ENCODE measurements at regions of chr4 and their contacts with region 1.

Region 1: GRCh38 chr4:112327965-112328733 is 31.0 kb downstream of the ALPK1 start:
- DNase-seq: peak in 2 of 3 donors; percentile 29 to 34
- H3K4me3 ChIP-seq: no peak overlapping the region
- H3K4me3 Mint-ChIP-seq: no peak overlapping the region
- H3K27ac ChIP-seq: no peak overlapping the region
- H3K27ac Mint-ChIP-seq: no peak overlapping the region
- H3K4me1 ChIP-seq: peaks cover 11 to 17% of the 10 kb centered on the region in 2 donors
- H3K4me1 Mint-ChIP-seq: peaks cover 13% of the 10 kb centered on the region
- H3K27me3 ChIP-seq: no peaks in the 10 kb centered on the region
- H3K27me3 Mint-ChIP-seq: no peaks in the 10 kb centered on the region
- CTCF ChIP-seq: peak; percentile 54

Region 2: GRCh38 chr4:112214390-112215264 is 113.5 kb before region 1 on chr4:
- intact Hi-C with region 1: no loop called
- DNase-seq: peak; percentile 11 to 28 (median 14)
- H3K4me3 ChIP-seq: peak overlapping the region in 1 of 3 experiments; percentile 21
- H3K4me3 Mint-ChIP-seq: no peak overlapping the region
- H3K27ac ChIP-seq: peak overlapping the region in 1 of 2 donors; percentile 85
- H3K27ac Mint-ChIP-seq: peak overlapping the region; percentile 72 to 96 (median 91)
- H3K4me1 ChIP-seq: peaks cover 25 to 27% of the 10 kb centered on the region in 2 donors
- H3K4me1 Mint-ChIP-seq: peaks cover 25% of the 10 kb centered on the region
- H3K27me3 ChIP-seq: no peaks in the 10 kb centered on the region
- H3K27me3 Mint-ChIP-seq: peaks cover 0 to 2% (median 2%) of the 10 kb centered on the region in 3 donors
- CTCF ChIP-seq: no peak

Region 3: GRCh38 chr4:112284662-112285411 is 43.3 kb before region 1 on chr4:
- intact Hi-C with region 1: loop called in 1 of 2 experiments (anchors 5 kb)
- DNase-seq: peak in 2 of 3 donors; percentile 43 to 80
- H3K4me3 ChIP-seq: peak overlapping the region; percentile 53 to 93 (median 61)
- H3K4me3 Mint-ChIP-seq: peak overlapping the region; percentile 94 to 96
- H3K27ac ChIP-seq: peak overlapping the region; percentile 65 to 86
- H3K27ac Mint-ChIP-seq: peak overlapping the region; percentile 83 to 92 (median 91)
- H3K4me1 ChIP-seq: peaks cover 46 to 71% of the 10 kb centered on the region in 2 donors
- H3K4me1 Mint-ChIP-seq: peaks cover 86% of the 10 kb centered on the region
- H3K27me3 ChIP-seq: no peaks in the 10 kb centered on the region
- H3K27me3 Mint-ChIP-seq: no peaks in the 10 kb centered on the region
- CTCF ChIP-seq: no peak

Region 4: DNA sequence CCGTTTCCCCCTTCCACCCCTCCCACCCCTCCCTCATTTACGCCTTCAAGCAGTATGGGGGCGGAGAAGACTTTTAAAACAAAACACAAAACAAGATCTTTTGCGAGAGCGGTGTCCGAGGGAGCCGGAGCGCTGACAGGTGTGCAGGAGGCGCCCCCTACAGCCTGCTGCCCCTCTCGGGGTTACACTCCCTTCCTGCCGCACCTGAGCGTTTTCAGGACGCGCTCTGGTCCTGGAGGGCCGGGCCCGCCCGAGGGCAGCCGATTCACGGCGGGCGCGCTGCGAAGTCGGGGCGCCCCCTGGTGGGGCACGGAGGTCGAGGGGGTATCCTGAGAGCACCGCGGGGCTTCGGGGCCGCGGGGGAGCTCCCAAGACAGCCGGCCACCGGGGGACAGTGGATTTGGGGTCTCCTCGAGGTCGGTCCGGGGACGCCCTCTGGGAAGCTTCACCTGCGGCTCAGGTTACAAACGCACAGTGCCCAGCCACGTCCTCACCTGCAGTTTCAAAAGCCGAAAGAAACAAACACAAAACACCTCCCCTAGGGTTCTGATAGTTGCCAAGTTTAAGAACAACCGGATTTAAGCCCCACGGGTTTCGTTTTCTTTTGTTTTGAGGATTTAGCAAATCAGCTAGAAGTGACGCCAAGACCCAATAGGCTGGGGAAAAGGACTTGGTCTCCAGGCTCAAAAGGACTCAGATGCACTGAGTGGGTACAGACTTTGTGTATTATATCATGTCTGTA is 195.8 kb after region 1 on chr4:
- intact Hi-C with region 1: loop called (anchors 5 kb)
- DNase-seq: peak; percentile 33 to 57 (median 42)
- H3K4me3 ChIP-seq: peak overlapping the region; percentile 47 to 82 (median 65)
- H3K4me3 Mint-ChIP-seq: peak overlapping the region; percentile 85 to 99
- H3K27ac ChIP-seq: no peak overlapping the region
- H3K27ac Mint-ChIP-seq: no peak overlapping the region
- H3K4me1 ChIP-seq: peaks cover 22 to 25% of the 10 kb centered on the region in 2 donors
- H3K4me1 Mint-ChIP-seq: peaks cover 44% of the 10 kb centered on the region
- H3K27me3 ChIP-seq: peaks cover 65 to 81% of the 10 kb centered on the region in 2 donors
- H3K27me3 Mint-ChIP-seq: peaks cover 81 to 87% (median 83%) of the 10 kb centered on the region in 3 donors
- CTCF ChIP-seq: peak; percentile 94

Measured in CD14-positive monocyte (primary cell).